ENCODE measurements at regions of chr2 and their contacts with region 1.

Region 1: GRCh38 chr2:68709421-68709911 is 25.1 kb upstream of the ARHGAP25 start:
- DNase-seq: peak; percentile 34
- ATAC-seq: peak; percentile 89
- H3K4me3 Mint-ChIP-seq: no peak overlapping the region
- H3K27ac Mint-ChIP-seq: peak overlapping the region; percentile 56
- H3K4me1 Mint-ChIP-seq: peaks cover 25% of the 10 kb centered on the region
- H3K27me3 Mint-ChIP-seq: no peaks in the 10 kb centered on the region

Region 2: DNA sequence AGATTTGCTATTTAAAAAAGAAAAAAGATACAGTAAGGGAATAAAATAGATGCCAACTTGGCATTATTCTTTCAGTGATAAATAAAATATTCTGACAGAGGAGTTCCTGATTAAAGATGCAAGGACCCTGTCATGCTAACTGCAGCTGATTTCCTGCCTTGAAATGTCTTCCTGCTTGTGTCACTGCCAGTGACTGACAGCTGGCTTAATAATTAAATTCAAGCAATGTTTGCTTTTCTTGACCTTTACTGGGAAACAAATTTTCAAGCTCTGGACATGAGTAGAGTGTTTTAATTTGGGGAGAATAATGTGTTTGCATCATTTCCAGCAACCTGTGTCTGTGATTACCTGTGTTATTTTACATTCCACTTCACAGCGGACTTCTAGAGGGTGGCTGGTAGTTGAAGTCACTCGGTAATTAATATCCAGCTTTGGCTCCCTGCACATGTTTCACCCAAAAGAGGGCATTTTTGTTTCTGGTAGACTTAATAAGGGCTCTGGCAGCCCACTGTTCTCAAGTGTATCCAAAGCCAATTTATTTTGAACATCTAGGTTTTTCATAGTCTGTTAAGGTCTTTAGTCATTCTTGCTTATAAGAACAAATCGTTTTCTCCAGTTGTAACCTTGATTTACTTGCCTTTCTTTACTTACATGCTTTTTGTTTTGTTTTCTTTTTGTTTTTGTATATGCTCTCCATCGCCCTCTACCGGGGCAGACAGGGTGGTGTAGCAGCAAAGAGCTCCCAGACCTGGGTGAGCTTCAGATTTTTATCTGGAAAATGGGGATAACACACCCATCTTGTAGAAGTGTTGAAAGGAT is 114.6 kb before region 1 on chr2:
- CTCF ChIA-PET with region 1: interaction called, 3 read pairs
- POLR2A ChIA-PET with region 1: no interaction called
- intact Hi-C with region 1: loop called (anchors 5 to 10 kb)
- DNase-seq: peak; percentile 72
- ATAC-seq: peak; percentile 49
- H3K4me3 Mint-ChIP-seq: no peak overlapping the region
- H3K27ac Mint-ChIP-seq: no peak overlapping the region
- H3K4me1 Mint-ChIP-seq: peaks cover 6% of the 10 kb centered on the region
- H3K27me3 Mint-ChIP-seq: peaks cover 9% of the 10 kb centered on the region

Region 3: GRCh38 chr2:68612765-68613519 is 96.5 kb before region 1 on chr2:
- CTCF ChIA-PET with region 1: no interaction called
- POLR2A ChIA-PET with region 1: no interaction called
- intact Hi-C with region 1: no loop called
- DNase-seq: no peak
- ATAC-seq: no peak
- H3K4me3 Mint-ChIP-seq: no peak overlapping the region
- H3K27ac Mint-ChIP-seq: no peak overlapping the region
- H3K4me1 Mint-ChIP-seq: no peaks in the 10 kb centered on the region
- H3K27me3 Mint-ChIP-seq: peaks cover 3% of the 10 kb centered on the region

Region 4: GRCh38 chr2:68696554-68696953 is 12.9 kb before region 1 on chr2:
- CTCF ChIA-PET with region 1: interaction called, 21 read pairs
- POLR2A ChIA-PET with region 1: no interaction called
- intact Hi-C with region 1: no loop called
- DNase-seq: no peak
- ATAC-seq: no peak
- H3K4me3 Mint-ChIP-seq: no peak overlapping the region
- H3K27ac Mint-ChIP-seq: no peak overlapping the region
- H3K4me1 Mint-ChIP-seq: no peaks in the 10 kb centered on the region
- H3K27me3 Mint-ChIP-seq: peaks cover 3% of the 10 kb centered on the region

Region 5: GRCh38 chr2:68734688-68735525 is 25.4 kb after region 1 on chr2 and contains the start of gene ARHGAP25:
- CTCF ChIA-PET with region 1: interaction called, 261 read pairs
- POLR2A ChIA-PET with region 1: no interaction called
- intact Hi-C with region 1: no loop called
- DNase-seq: peak; percentile 84
- ATAC-seq: peak; percentile 75
- H3K4me3 Mint-ChIP-seq: no peak within 1 kb of the TSS
- H3K27ac Mint-ChIP-seq: no peak within 1 kb of the TSS
- H3K4me1 Mint-ChIP-seq: peaks cover 40% of the 10 kb centered on the region
- H3K27me3 Mint-ChIP-seq: no peaks in the 10 kb centered on the region
- total RNA-seq, gene ARHGAP25: 57.9 to 73.2 TPM

Region 6: GRCh38 chr2:68849579-68850030 is 140.1 kb after region 1 on chr2:
- CTCF ChIA-PET with region 1: interaction called, 11 read pairs
- POLR2A ChIA-PET with region 1: interaction called, 4 read pairs
- intact Hi-C with region 1: no loop called
- DNase-seq: no peak
- ATAC-seq: no peak
- H3K4me3 Mint-ChIP-seq: no peak overlapping the region
- H3K27ac Mint-ChIP-seq: no peak overlapping the region
- H3K4me1 Mint-ChIP-seq: no peaks in the 10 kb centered on the region
- H3K27me3 Mint-ChIP-seq: peaks cover 13% of the 10 kb centered on the region

Region 7: DNA sequence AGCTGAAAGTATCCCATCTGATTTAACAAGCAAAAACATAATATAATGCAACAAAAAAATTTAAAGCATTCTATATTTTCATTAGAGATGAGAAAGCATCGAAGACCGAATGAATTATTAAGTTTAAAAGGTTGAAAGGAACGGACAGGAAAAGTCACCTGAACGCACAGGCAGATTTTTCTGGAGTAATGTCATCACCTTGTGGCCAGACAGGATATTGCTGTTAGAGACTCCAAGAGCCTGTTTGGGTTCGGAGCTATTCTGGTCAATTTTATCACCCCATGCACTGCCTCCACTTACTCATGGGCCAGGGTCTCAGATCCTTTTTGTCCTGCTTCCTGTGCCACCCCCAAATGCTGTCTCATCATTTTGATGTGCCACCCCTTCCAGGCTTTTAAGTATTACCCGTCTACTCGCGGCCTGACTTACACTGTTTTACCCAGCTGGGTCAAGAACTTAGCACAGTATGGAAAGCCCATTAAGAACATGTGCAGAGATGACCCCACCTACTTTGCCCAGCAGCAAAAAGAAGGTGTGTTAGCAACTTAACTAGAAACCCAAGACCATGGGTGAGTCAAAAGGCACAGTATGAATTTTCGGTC is 215.9 kb after region 1 on chr2:
- CTCF ChIA-PET with region 1: interaction called, 54 read pairs
- POLR2A ChIA-PET with region 1: interaction called, 3 read pairs
- intact Hi-C with region 1: loop called (anchors 1 kb)
- DNase-seq: peak; percentile 63
- ATAC-seq: peak; percentile 75
- H3K4me3 Mint-ChIP-seq: no peak overlapping the region
- H3K27ac Mint-ChIP-seq: no peak overlapping the region
- H3K4me1 Mint-ChIP-seq: peaks cover 4% of the 10 kb centered on the region
- H3K27me3 Mint-ChIP-seq: peaks cover 2% of the 10 kb centered on the region

Measured in activated CD4-positive, alpha-beta T cell treated with anti-CD3 and anti-CD28 coated beads for 36 hours (primary cell).